Activated T-helper 1 cell treated with anti-CD3 and anti-CD28 coated beads, Interleukin-12 subunit alpha, Interleukin-12 subunit beta, Interleukin-2, Interleukin-4 antibody, amounts not matched to agents 30 ng/mL and 10 ng/mL and 1 ng/mL, durations not matched to agents 14 hours and 24 hours and 36 hours (primary cell): ENCODE measurements at regions of chr12 and their contacts with region 1.

Region 1: GRCh38 chr12:27534060-27534764 is 10.2 kb downstream of the PPFIBP1 start:
- DNase-seq: peak; percentile 16
- H3K4me3 Mint-ChIP-seq: peak overlapping the region; percentile 40
- H3K27ac Mint-ChIP-seq: peak overlapping the region; percentile 66
- H3K4me1 Mint-ChIP-seq: peaks cover 77% of the 10 kb centered on the region
- H3K27me3 Mint-ChIP-seq: peaks cover 4% of the 10 kb centered on the region

Region 2: DNA sequence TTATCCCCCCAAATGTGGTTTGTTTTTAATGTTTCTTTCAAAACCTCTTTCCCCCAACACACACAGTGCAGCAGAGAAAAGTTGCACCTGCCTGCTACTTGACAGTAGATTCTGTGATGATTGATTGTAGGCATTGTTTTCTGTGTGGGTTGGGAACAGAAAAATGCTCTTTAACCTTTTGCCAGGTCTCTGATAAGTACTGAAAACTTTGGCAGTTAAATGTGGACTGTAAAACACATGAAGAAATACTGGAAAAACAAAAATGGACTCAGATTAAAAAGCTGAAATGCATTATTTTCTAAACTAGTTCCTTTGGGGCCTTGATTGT is 261.5 kb before region 1 on chr12:
- intact Hi-C with region 1: no loop called
- DNase-seq: no peak
- H3K4me3 Mint-ChIP-seq: no peak overlapping the region
- H3K27ac Mint-ChIP-seq: no peak overlapping the region
- H3K4me1 Mint-ChIP-seq: peaks cover 8% of the 10 kb centered on the region
- H3K27me3 Mint-ChIP-seq: no peaks in the 10 kb centered on the region

Region 3: DNA sequence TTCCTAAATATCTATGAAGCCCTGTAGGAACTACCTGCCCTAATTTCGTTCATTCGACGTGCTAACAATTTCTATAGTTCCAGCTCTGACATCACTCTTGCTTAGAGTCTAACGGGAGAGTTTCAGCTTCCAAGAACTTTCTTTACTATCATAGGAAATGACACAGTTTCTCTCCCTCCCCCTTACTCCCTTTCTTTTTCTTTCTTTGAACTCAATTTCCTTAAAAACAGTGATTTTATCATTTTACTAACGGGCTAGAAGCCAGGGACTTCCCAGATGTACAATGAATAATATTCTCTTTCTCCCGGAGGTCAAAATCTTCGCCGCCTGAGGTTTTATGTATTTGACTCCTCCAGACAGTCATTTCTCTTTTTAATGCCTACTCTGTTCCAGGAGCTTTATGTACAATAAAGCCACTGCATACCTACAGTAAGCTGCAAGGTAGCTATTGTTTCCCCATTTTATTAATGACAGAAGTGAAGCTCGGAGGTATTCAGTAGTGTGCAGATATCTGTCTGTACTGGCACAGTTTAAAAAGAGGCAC is 72.0 kb before region 1 on chr12:
- intact Hi-C with region 1: loop called (anchors 1 kb)
- DNase-seq: no peak
- H3K4me3 Mint-ChIP-seq: peak overlapping the region; percentile 53
- H3K27ac Mint-ChIP-seq: peak overlapping the region; percentile 84
- H3K4me1 Mint-ChIP-seq: peaks cover 69% of the 10 kb centered on the region
- H3K27me3 Mint-ChIP-seq: no peaks in the 10 kb centered on the region

Region 4: GRCh38 chr12:27488479-27488878 is 45.7 kb before region 1 on chr12:
- intact Hi-C with region 1: no loop called
- DNase-seq: no peak
- H3K4me3 Mint-ChIP-seq: no peak overlapping the region
- H3K27ac Mint-ChIP-seq: no peak overlapping the region
- H3K4me1 Mint-ChIP-seq: peaks cover 6% of the 10 kb centered on the region
- H3K27me3 Mint-ChIP-seq: peaks cover 7% of the 10 kb centered on the region

Region 5: GRCh38 chr12:27523642-27524493 is 10.3 kb before region 1 on chr12 and contains the start of gene PPFIBP1:
- intact Hi-C with region 1: loop called (anchors 1 kb)
- DNase-seq: peak; percentile 83
- H3K4me3 Mint-ChIP-seq: peak within 1 kb of the TSS; percentile 89
- H3K27ac Mint-ChIP-seq: peak within 1 kb of the TSS; percentile 90
- H3K4me1 Mint-ChIP-seq: peaks cover 56% of the 10 kb centered on the region
- H3K27me3 Mint-ChIP-seq: peaks cover 19% of the 10 kb centered on the region
- total RNA-seq, gene PPFIBP1: 53.8 and 55.7 TPM in 2 replicates

Region 6: DNA sequence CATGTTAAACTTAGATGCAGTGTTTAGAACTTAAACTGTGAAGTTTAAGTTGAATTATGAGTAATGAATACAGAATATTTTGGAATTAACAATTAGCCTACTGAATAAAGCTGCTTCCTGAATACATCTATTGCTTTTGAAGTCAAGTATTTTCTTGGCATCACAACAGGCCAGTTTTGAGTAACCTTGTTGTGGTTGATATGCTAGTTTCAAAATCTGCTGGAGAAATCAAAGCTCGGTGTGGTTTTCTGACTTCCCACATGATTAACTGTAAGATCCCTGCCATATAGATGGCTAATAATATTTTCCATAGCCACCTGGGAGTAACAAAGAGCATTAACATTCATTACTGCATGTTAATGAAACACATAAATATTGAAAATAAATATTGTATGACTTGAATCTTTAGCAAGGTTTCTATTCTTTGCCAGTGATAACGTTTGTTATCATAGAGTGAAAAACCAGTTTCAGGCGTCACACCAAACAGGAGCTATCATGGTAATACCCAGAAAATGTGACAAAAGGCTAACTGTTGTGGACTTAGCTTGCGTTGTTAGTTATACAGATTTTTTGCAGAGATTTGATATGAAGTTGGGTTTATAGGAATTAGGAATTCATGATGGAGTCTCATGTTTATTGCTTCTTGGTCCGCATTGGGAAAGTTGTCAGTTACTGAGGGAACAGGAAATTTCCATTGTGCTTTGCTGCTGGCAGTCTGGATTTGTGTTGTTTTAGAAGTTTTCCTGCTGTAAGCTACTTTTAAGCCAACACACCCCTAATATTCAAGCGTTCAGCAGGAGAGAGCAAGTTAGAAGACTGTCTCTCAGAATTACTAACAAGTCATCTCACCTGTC is 21.9 kb after region 1 on chr12:
- intact Hi-C with region 1: loop called (anchors 1 kb)
- DNase-seq: no peak
- H3K4me3 Mint-ChIP-seq: no peak overlapping the region
- H3K27ac Mint-ChIP-seq: no peak overlapping the region
- H3K4me1 Mint-ChIP-seq: peaks cover 42% of the 10 kb centered on the region
- H3K27me3 Mint-ChIP-seq: peaks cover 7% of the 10 kb centered on the region